GM18951 (cell line): ENCODE measurements at regions of chr15 and their contacts with region 1.

Region 1: DNA sequence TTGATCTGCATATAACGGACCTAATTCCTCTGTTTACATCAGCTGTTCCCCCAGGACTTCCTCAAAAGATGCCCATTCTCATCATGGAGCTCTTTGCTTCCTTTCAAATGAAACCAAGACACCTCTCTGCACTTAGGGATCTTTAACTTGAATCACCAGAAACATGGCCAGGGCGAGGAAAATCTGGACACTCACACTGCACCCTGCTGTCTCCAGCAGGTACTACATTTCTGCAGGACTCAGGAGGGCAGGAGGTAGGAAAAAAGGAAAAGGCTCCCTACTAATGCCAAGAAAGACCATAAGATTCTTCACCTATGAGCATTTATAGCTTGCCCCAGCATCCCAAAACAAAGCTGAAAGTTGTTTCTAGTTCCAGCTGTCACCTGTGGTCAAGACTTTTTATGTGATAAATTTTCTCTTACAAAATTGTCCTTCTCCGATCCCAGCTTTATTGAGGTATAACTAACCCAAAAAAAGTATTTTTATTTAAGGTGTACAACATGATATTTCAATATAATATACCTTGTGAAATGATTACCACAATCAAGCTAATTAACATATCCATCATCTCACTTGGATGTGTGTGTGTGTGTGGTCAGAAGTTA is 87.3 kb upstream of the C15orf61 start:
- POLR2A ChIP-seq: no peak

Region 2: GRCh38 chr15:66401130-66402021 is 1032.2 kb before region 1 on chr15:
- in situ Hi-C with region 1: no loop called
- POLR2A ChIP-seq: peak; percentile 33

Region 3: GRCh38 chr15:66545249-66545648 is 888.3 kb before region 1 on chr15:
- in situ Hi-C with region 1: no loop called
- POLR2A ChIP-seq: no peak

Region 4: DNA sequence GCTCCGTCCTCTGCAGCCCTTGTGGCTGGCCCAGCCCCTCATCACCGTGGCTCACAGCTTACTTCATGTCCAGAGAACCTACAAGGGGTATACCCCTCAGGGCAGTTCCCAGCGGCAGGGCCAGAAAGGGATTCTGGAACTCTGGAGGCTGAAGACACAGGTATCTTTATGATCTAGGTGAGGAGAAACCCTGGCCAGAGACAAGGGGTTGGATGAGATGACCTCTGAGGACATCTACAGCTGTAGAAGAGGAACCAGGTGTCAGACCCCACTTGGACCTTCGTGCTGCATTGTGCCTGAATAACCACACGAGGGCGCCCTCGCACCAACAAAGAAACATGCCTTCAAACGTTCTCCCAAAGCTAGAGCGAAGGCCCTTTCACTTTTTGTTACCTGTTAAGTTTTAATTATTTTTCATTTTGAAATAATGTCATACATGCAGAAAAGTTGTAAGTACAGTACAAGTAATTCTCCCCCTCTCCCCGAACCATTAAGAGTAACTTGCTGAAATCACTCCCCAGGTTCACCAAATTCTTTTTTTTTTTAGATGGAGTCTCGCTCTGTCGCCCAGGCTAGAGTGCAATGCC is 486.9 kb before region 1 on chr15:
- in situ Hi-C with region 1: loop called (anchors 10 kb)
- POLR2A ChIP-seq: no peak

Region 5: DNA sequence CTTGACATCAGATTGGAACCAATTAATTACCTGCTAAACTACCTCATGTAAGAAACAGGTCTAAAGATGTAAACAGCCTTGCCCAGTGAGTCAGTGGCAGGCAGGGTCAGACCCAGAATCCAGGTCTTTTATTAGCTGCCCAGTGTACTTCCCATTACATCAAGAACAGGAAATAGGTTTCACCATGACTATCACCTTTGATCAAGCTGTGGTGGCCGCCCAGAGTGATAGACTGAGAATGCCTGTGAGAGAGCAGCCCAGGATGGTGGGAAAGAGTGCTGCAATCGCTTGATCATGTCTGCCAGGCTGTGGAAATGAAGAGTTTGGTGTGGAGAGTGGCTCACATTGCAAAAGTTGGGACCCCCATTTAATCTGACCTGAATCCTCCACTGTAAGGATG is 559.2 kb after region 1 on chr15:
- in situ Hi-C with region 1: no loop called
- POLR2A ChIP-seq: no peak